ENCODE measurements at regions of chr18 and their contacts with region 1.

Region 1: DNA sequence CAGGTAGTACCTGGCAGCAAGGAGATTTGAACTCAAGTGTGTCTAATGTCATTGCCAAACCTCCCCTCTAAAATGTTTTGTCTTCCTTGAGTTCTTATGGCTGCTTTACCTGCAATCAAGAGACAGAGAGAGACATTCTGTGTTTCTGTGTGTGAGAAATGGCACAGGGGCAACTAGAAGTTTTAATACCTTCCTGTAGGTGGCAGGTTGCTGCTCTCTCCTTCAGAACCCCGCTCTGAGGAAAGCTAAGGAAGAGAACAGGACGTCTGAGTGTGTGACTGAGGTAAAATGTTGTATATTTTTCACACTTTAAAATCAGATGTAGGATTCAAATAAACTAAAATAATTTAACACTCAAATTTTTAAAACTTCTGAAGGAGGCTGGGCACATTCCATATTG is 19.2 kb downstream of the DTNA start:
- DNase-seq: peak; percentile 45
- ATAC-seq: peak; percentile 92
- H3K4me3 Mint-ChIP-seq: no peak overlapping the region
- H3K27ac Mint-ChIP-seq: no peak overlapping the region
- H3K4me1 Mint-ChIP-seq: peaks cover 21% of the 10 kb centered on the region
- H3K27me3 Mint-ChIP-seq: no peaks in the 10 kb centered on the region
- CTCF ChIP-seq: peak; percentile 31; the same call in 1 of the 2 replicates

Region 2: GRCh38 chr18:34707670-34708069 is 21.6 kb before region 1 on chr18:
- CTCF ChIA-PET with region 1: interaction called, 20 read pairs
- POLR2A ChIA-PET with region 1: no interaction called
- DNase-seq: no peak
- ATAC-seq: peak; percentile 42
- H3K4me3 Mint-ChIP-seq: peak overlapping the region; percentile 16
- H3K27ac Mint-ChIP-seq: peak overlapping the region; percentile 90
- H3K4me1 Mint-ChIP-seq: peaks cover 48% of the 10 kb centered on the region
- H3K27me3 Mint-ChIP-seq: no peaks in the 10 kb centered on the region
- CTCF ChIP-seq: no peak

Region 3: GRCh38 chr18:34787931-34788532 is 58.8 kb after region 1 on chr18:
- CTCF ChIA-PET with region 1: interaction called, 10 read pairs
- POLR2A ChIA-PET with region 1: no interaction called
- DNase-seq: no peak
- ATAC-seq: peak; percentile 77
- H3K4me3 Mint-ChIP-seq: no peak overlapping the region
- H3K27ac Mint-ChIP-seq: no peak overlapping the region
- H3K4me1 Mint-ChIP-seq: peaks cover 19% of the 10 kb centered on the region
- H3K27me3 Mint-ChIP-seq: no peaks in the 10 kb centered on the region
- CTCF ChIP-seq: peak; percentile 64